ENCODE measurements at regions of chr18 and their contacts with region 1.

Region 1: GRCh38 chr18:63578357-63578958 is 8.7 kb upstream of the SERPINB13 start:
- DNase-seq: no peak
- ATAC-seq: no peak

Region 2: GRCh38 chr18:63177919-63178821 is 400.3 kb before region 1 on chr18:
- intact Hi-C with region 1: no loop called
- DNase-seq: peak; percentile 87
- ATAC-seq: peak; percentile 83

Region 3: GRCh38 chr18:63518178-63519012 is 60.1 kb before region 1 on chr18:
- intact Hi-C with region 1: loop called (anchors 2 kb)
- DNase-seq: no peak
- ATAC-seq: no peak

Region 4: DNA sequence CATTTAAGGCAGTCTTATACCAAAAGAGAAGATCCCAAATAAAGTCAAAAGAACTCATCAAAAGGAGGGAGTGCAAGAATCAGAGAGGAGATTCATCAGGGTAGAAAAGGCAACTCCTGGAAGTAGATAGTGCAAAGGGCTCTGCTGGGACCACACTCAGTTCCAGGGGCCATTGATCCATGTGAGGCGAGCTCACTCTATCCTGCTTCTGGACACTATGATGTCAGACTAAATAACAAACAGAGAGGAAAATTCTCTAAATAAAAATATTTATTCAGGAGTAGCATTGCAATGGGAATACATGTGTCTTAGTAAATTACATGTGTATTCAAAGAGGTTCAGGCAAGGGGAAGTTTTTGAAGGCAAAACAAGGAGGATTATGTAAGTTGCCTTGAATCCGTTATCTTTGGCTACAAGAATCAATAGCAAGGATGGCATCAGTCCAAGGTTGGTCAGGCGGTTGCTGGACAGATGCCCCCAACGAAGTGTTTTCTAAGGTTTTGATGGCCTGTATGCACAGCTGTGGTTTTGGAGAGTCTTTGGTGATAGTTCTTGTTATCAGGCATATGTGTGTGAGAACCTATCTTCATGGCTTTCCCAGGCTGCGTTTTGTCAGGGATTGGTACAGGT is 49.5 kb before region 1 on chr18:
- intact Hi-C with region 1: no loop called
- DNase-seq: no peak
- ATAC-seq: no peak

Measured in Right ventricle myocardium inferior (tissue), 1 donor.